ENCODE measurements at regions of chr18 and their contacts with region 1.

Region 1: DNA sequence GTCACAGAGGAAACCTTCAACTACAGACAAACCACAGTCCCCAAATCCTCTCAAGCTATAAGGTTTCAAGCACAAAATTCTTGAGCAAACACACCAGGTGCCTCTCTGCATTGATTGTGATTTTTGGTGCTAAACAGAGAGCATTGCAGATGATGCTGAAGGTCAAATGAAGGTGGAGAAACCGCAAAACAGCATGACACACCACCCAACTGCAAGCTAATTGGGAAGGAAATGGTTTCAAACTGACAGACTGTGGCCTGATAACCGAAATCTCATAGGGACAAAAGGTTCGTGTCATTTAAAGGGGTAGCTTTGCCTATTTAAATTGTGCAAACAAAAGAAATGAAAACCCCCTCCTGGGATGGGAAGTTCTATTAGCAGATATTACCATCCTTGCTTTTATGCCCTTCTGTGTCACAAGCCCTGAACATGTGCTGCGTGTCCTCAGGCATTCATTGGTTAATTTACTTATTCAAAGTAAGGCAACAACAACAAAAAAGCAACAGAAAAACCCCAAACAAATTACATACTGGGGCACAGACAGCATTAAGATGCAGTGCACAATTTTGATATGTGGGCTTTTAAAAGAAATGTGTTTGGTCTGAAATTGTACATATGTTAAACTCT is 154.9 kb downstream of the AQP4 start:
- DNase-seq: peak; percentile 73
- ATAC-seq: peak; percentile 95
- H3K4me3 ChIP-seq: no peak overlapping the region
- H3K27ac ChIP-seq: peak overlapping the region; percentile 40; the same call in 1 of the 2 replicates
- H3K4me1 ChIP-seq: peaks cover 4% of the 10 kb centered on the region; the same call in 1 of the 2 replicates
- H3K27me3 ChIP-seq: no peaks in the 10 kb centered on the region
- CTCF ChIP-seq: no peak
- EP300 ChIP-seq: peak; percentile 90 to 98
- POLR2A ChIP-seq: no peak
- RAD21 ChIP-seq: 0 out of 2 replicates have a peak, but pooled peaks have one; percentile 6

Region 2: DNA sequence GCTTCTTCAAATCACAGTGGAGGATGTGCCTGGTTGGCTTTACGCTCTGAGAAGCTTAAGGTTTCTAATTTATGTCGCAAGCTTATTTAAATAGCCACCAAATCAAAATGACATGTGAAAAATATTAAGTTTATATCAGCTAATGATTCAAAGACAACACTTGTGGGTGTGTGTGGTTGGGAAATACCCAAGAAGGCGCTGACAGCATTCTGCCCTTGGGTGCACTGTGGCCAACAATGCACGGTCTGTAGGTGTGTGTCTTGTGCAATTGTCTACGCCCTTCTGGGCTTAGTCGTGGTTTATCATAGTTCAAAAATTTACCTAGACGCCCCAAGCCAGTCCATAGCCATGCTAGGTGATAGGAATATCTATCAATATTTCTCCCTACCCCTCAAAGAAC is 223.1 kb before region 1 on chr18:
- CTCF ChIA-PET with region 1: no interaction called
- POLR2A ChIA-PET with region 1: no interaction called
- RAD21 ChIA-PET with region 1: no interaction called
- SMC1A ChIA-PET with region 1: no interaction called
- in situ Hi-C with region 1: no loop called
- intact Hi-C with region 1: no loop called
- DNase-seq: peak; percentile 23
- ATAC-seq: peak; percentile 99
- H3K4me3 ChIP-seq: no peak overlapping the region
- H3K27ac ChIP-seq: no peak overlapping the region
- H3K4me1 ChIP-seq: no peaks in the 10 kb centered on the region
- H3K27me3 ChIP-seq: no peaks in the 10 kb centered on the region
- CTCF ChIP-seq: no peak
- EP300 ChIP-seq: peak in 1 of 2 experiments; percentile 75; a peak in 2 of 4 replicates
- POLR2A ChIP-seq: no peak
- RAD21 ChIP-seq: no peak

Region 3: DNA sequence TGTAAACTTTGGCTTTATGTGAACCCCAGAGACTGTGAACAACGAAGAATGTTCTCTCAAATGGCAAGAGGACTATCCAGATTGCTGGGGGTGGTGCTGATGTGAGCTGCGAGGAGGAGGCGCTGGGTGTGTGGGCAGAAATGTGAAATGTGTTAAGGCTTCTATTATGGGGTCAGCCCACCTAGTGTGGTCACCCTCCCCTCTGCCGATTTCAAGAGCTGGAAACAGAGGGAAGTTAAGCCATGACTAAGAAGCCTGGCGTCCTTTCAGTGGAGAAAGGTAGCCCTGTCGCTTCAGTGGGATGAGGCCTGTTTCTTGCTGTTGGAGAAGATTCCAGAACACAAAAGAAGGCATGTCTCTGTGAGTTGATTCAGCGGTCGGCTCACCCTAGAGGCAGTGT is 73.3 kb before region 1 on chr18:
- CTCF ChIA-PET with region 1: no interaction called
- POLR2A ChIA-PET with region 1: no interaction called
- RAD21 ChIA-PET with region 1: no interaction called
- SMC1A ChIA-PET with region 1: no interaction called
- in situ Hi-C with region 1: no loop called
- intact Hi-C with region 1: no loop called
- DNase-seq: no peak
- ATAC-seq: no peak
- H3K4me3 ChIP-seq: no peak overlapping the region
- H3K27ac ChIP-seq: no peak overlapping the region
- H3K4me1 ChIP-seq: no peaks in the 10 kb centered on the region
- H3K27me3 ChIP-seq: peaks cover 0 to 4% of the 10 kb centered on the region in 2 experiments; a peak in 2 of 4 replicates
- CTCF ChIP-seq: no peak
- EP300 ChIP-seq: no peak
- POLR2A ChIP-seq: no peak
- RAD21 ChIP-seq: no peak

Region 4: DNA sequence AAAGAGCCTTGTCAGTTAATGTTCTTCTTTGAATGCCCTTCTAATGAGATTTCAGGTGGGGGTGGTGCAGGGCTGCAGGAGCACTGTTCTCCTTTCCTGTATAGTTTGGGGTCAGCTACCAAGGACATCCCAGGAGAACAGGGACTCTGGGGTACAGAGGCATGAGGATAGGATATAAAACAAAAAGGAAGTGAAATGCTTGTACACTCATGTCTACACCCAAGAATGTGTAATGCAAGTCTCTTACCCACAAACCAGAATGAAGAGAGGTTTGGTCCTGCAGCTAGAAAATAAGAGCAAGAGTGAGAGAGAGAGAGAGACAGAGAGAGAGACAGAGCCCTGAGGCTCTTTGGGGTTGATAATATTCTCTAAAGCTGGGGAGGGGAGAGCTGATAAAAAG is 10.4 kb before region 1 on chr18:
- CTCF ChIA-PET with region 1: interaction called, 5 read pairs
- POLR2A ChIA-PET with region 1: interaction called, 3 read pairs
- RAD21 ChIA-PET with region 1: no interaction called
- SMC1A ChIA-PET with region 1: interaction called, 13 read pairs
- in situ Hi-C with region 1: no loop called
- intact Hi-C with region 1: no loop called
- DNase-seq: no peak
- ATAC-seq: peak; percentile 51
- H3K4me3 ChIP-seq: no peak overlapping the region
- H3K27ac ChIP-seq: no peak overlapping the region
- H3K4me1 ChIP-seq: no peaks in the 10 kb centered on the region; the same call in 1 of the 2 replicates
- H3K27me3 ChIP-seq: 0 out of 4 replicates have a peak, but pooled peaks cover 0 to 3% of the 10 kb centered on the region in 2 experiments
- CTCF ChIP-seq: no peak
- EP300 ChIP-seq: no peak
- POLR2A ChIP-seq: no peak
- RAD21 ChIP-seq: no peak

Region 5: DNA sequence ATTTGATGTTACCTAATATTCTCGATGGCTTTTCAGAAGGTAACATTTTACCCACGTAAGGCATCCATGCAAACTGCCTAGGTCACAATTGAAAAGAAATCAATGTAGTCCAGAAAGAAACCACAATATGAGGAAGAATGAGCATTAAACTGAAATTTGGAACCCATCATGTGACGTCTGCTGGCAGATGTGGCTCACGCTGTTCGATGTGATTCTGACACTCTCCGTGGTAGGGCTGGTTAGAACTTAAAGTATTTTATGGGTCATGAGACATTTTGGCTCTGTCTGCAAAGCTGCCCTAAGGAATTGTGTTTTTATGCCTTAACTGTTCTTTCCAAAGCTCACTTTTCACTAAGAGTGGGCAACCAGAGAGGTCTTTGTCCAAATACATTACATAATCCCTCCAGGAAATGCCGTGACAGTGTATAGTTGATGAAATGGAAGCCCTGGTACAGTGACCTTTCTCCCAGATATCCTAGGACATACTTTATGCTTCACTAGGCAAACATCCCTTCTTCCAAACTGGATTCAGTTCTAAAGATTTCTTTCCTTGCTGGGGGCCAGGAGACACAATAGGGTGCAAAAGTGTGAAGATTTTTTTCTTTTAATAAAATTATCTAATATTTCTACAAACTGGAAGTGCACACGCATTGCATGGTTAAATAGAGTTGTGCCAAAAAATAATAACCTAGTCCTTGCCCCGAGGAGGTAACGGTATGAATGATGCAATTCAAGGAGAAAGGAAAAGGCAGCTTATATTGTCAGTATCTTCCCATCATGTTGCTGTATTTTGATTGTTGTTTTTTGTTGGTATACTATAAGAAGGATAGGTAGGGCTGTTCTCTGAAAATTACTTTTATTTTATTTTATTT is 35.9 kb after region 1 on chr18:
- CTCF ChIA-PET with region 1: interaction called, 3 read pairs
- POLR2A ChIA-PET with region 1: no interaction called
- RAD21 ChIA-PET with region 1: no interaction called
- SMC1A ChIA-PET with region 1: interaction called, 3 read pairs
- in situ Hi-C with region 1: no loop called
- intact Hi-C with region 1: loop called (anchors 1 kb)
- DNase-seq: no peak
- ATAC-seq: no peak
- H3K4me3 ChIP-seq: no peak overlapping the region
- H3K27ac ChIP-seq: no peak overlapping the region
- H3K4me1 ChIP-seq: peaks cover 4% of the 10 kb centered on the region; the same call in 1 of the 2 replicates
- H3K27me3 ChIP-seq: no peaks in the 10 kb centered on the region
- CTCF ChIP-seq: no peak
- EP300 ChIP-seq: no peak
- POLR2A ChIP-seq: no peak
- RAD21 ChIP-seq: no peak

Region 6: GRCh38 chr18:26840965-26841364 is 130.4 kb after region 1 on chr18:
- CTCF ChIA-PET with region 1: no interaction called
- POLR2A ChIA-PET with region 1: no interaction called
- RAD21 ChIA-PET with region 1: no interaction called
- SMC1A ChIA-PET with region 1: no interaction called
- in situ Hi-C with region 1: no loop called
- intact Hi-C with region 1: no loop called
- DNase-seq: no peak
- ATAC-seq: no peak
- H3K4me3 ChIP-seq: no peak overlapping the region
- H3K27ac ChIP-seq: no peak overlapping the region
- H3K4me1 ChIP-seq: no peaks in the 10 kb centered on the region
- H3K27me3 ChIP-seq: no peaks in the 10 kb centered on the region
- CTCF ChIP-seq: 0 out of 6 replicates have a peak, but pooled peaks of 1 of the 3 experiments have one; percentile 7
- EP300 ChIP-seq: no peak
- POLR2A ChIP-seq: no peak
- RAD21 ChIP-seq: no peak